ENCODE measurements at regions of chr19 and their contacts with region 1.

Region 1: GRCh38 chr19:3818466-3818865 is 32.3 kb upstream of the MATK start:
- DNase-seq: no peak

Region 2: GRCh38 chr19:4007021-4007835 is 188.8 kb after region 1 on chr19 and contains the start of gene PIAS4:
- intact Hi-C with region 1: no loop called
- DNase-seq: peak; percentile 98
- total RNA-seq, gene PIAS4: 14.4 to 16.1 TPM

Region 3: DNA sequence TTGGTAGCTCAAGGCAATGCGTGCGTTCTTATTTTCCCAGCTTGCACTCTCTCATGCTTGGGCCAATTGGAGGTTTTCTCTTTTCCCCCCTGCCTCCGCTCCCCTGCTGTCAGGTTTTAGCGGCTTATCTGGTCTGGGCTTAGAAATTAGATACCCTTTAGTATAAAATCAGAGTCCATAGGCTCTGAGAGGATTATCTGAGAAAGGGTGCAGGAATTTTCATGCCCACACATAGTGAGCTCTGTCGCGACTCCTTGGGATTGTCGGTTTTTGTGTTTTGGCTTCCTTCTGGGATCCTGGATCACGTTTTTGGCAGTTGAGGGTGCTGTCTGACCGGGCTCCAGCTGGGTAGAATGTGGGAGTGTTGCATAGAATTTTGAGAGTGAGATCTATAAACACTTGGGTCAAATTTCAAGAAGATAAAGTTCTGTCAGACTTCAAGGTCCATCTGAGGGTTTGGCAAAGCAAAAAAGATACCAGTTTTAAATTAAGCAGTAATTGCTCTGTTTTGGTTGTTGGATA is 596.4 kb after region 1 on chr19:
- intact Hi-C with region 1: loop called in 1 of 2 experiments (anchors 5 kb)
- DNase-seq: no peak